PC-3 (cell line): ENCODE measurements at regions of chr1 and their contacts with region 1.

Region 1: DNA sequence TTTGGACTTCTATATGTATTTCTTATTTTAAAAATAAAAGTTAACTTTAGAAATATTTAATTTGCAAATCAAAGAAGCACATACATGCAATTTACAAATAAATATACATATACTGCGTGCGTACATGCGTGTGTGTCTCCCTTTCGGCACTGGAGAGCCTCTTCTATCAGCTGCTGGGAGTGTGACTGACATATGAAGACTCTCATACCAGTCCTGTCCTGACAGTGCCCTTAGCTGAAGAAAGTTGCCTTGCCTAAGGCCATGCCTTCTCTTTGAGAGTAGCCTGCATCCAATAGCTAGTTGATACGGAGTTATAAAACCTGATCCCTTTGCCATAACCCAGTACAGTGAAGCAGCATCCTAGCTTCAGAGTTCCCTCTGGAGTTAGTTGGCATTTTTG is 282.4 kb upstream of the NEGR1 start:
- DNase-seq: no peak
- ATAC-seq: no peak
- H3K4me3 ChIP-seq: no peak overlapping the region
- H3K27ac ChIP-seq: no peak overlapping the region
- H3K4me1 ChIP-seq: no peaks in the 10 kb centered on the region
- H3K27me3 ChIP-seq: no peaks in the 10 kb centered on the region
- CTCF ChIP-seq: no peak

Region 2: DNA sequence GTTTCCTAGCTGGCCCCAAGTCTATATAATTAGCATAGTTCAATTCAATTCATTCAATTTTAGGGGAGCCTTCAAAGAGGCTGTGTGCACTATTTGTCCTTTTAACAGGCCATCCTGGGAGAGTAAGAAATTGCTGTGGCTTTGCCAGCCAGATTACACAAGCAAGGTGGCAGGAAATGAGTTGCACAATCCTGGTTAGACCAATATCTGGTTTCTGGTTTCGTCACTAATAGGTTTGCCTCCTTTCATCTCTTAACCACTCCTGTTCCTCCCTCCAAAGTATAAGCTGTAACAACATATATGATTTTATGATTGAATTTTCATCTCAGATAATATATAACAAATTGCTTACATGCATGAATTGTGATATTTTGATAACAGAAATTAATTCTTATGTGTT is 198.3 kb before region 1 on chr1:
- CTCF ChIA-PET with region 1: no interaction called
- POLR2A ChIA-PET with region 1: interaction called, 14 read pairs
- intact Hi-C with region 1: no loop called
- DNase-seq: peak; percentile 89
- ATAC-seq: peak; percentile 86
- H3K4me3 ChIP-seq: no peak overlapping the region
- H3K27ac ChIP-seq: no peak overlapping the region
- H3K4me1 ChIP-seq: peaks cover 17% of the 10 kb centered on the region
- H3K27me3 ChIP-seq: no peaks in the 10 kb centered on the region
- CTCF ChIP-seq: no peak

Region 3: GRCh38 chr1:72394457-72394856 is 170.3 kb before region 1 on chr1:
- CTCF ChIA-PET with region 1: no interaction called
- POLR2A ChIA-PET with region 1: no interaction called
- intact Hi-C with region 1: no loop called
- DNase-seq: no peak
- ATAC-seq: no peak
- H3K4me3 ChIP-seq: no peak overlapping the region
- H3K27ac ChIP-seq: no peak overlapping the region
- H3K4me1 ChIP-seq: peaks cover 8% of the 10 kb centered on the region
- H3K27me3 ChIP-seq: no peaks in the 10 kb centered on the region
- CTCF ChIP-seq: no peak

Region 4: GRCh38 chr1:73044241-73045036 is 479.7 kb after region 1 on chr1:
- CTCF ChIA-PET with region 1: no interaction called
- POLR2A ChIA-PET with region 1: no interaction called
- intact Hi-C with region 1: no loop called
- DNase-seq: no peak
- ATAC-seq: peak; percentile 50
- H3K4me3 ChIP-seq: no peak overlapping the region
- H3K27ac ChIP-seq: no peak overlapping the region
- H3K4me1 ChIP-seq: no peaks in the 10 kb centered on the region
- H3K27me3 ChIP-seq: no peaks in the 10 kb centered on the region
- CTCF ChIP-seq: no peak